ENCODE measurements at regions of chr17 and their contacts with region 1.

Region 1: DNA sequence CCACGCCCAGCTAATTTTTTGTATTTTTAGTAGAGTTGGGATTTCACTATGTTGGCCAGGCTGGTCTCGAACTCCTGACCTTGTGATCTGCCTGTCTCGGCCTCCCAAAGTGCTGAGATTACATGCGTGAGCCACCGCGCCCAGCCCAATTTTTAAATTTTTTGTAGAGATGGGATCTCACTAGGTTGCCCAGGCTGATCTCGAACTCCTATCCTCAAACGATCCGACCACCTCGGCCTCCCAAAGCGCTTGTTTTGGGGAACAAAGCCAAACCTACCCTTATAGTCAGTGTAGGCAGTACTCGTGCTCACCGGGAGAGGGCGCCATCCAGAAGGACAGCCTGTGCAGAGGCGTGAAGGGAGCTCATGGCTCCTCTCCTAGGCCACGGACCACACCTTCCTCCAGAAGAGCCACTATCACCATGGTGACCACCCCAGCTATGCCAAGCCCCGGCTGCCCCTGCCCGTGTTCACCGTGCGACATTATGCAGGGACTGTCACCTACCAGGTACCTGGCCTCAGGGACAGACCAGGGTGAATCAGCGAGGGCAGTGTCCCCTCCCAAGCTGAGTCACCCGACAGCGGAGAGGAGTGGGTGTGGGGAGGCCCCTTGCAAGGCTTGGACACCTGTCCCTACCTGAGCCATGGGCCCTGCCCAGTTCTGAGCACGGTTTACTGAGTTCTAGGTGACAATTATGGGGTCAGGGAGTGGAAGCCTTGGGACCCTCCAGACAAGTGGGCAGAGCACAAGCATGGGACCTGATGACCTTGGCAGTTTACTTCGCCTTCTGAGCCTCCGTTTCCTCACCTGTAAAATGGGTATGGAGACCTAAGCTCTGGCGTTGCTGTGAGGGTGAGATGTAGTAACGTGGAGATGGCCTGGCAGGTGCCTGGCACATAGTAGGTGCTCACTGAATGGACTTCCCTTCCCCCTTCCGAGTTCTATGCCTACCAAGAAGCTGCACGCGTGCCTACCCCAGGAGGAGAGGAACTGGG is 13.8 kb downstream of the MYO15B start:
- DNase-seq: peak; percentile 82 to 88
- ATAC-seq: peak; percentile 55 to 87
- H3K4me3 ChIP-seq: no peak overlapping the region
- H3K27ac ChIP-seq: peak overlapping the region; percentile 40 to 64
- H3K4me1 ChIP-seq: peaks cover 43% of the 10 kb centered on the region
- CTCF ChIP-seq: peak; percentile 86
- EP300 ChIP-seq: no peak
- POLR2A ChIP-seq: no peak
- RAD21 ChIP-seq: peak; percentile 62 to 63

Region 2: GRCh38 chr17:75565068-75565467 is 36.3 kb before region 1 on chr17:
- CTCF ChIA-PET with region 1: interaction called, 10 read pairs
- POLR2A ChIA-PET with region 1: no interaction called
- DNase-seq: peak; percentile 59 to 70
- ATAC-seq: peak; percentile 81 to 84
- H3K4me3 ChIP-seq: no peak overlapping the region
- H3K27ac ChIP-seq: peak overlapping the region; percentile 47 to 69; a peak in 4 of 6 replicates
- H3K4me1 ChIP-seq: peaks cover 30% of the 10 kb centered on the region
- CTCF ChIP-seq: no peak
- EP300 ChIP-seq: no peak
- POLR2A ChIP-seq: no peak
- RAD21 ChIP-seq: no peak

Region 3: GRCh38 chr17:75589012-75589918 is 12.1 kb before region 1 on chr17:
- CTCF ChIA-PET with region 1: interaction called, 926 read pairs
- POLR2A ChIA-PET with region 1: no interaction called
- DNase-seq: peak; percentile 91 to 96
- ATAC-seq: peak; percentile 80 to 90
- H3K4me3 ChIP-seq: peak overlapping the region; percentile 57
- H3K27ac ChIP-seq: peak overlapping the region; percentile 90
- H3K4me1 ChIP-seq: peaks cover 21% of the 10 kb centered on the region
- CTCF ChIP-seq: peak; percentile 87
- EP300 ChIP-seq: no peak
- POLR2A ChIP-seq: peak; percentile 23
- RAD21 ChIP-seq: peak; percentile 50 to 83

Region 4: DNA sequence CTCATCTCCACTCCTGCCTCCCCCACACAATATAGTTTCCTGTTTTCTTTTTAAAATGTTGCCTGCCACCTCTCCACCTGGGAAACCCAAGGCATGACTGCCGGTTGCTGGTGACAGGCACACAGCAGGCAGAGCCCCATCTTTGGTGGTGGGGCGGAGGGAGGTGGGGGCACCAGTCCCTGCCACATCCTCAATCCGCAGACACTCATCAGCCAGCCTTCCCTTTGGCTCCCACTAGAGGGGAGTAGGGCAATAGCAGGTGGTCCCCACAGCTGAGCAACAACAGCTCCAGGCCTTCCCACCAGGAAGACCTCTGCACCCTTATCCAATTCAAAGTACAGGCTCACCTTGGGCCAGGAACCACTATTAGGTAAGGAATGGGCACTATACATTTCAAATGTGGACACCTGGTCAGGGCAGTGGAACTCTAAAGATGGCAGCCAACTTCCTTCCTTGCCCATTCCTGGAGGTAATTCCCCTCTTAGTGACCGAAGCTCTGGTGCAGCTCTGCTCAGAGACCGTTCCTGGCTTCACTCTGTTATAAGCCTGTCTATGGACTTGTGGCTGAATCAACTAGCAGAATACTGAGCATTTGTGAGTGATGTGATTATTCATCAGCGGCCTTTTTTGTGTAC is 51.7 kb after region 1 on chr17:
- CTCF ChIA-PET with region 1: interaction called, 45 read pairs
- POLR2A ChIA-PET with region 1: no interaction called
- DNase-seq: peak; percentile 58 to 60
- ATAC-seq: peak; percentile 86 to 93
- H3K4me3 ChIP-seq: no peak overlapping the region
- H3K27ac ChIP-seq: 0 out of 6 replicates have a peak overlapping the region, but pooled peaks of 1 of the 2 experiments have one; percentile 11
- H3K4me1 ChIP-seq: no peaks in the 10 kb centered on the region
- CTCF ChIP-seq: peak; percentile 70
- EP300 ChIP-seq: no peak
- POLR2A ChIP-seq: no peak
- RAD21 ChIP-seq: peak; percentile 55 to 79; a peak in 4 of 5 replicates